Activated B cell treated with CpG ODN at 0.5 μM for 24 hours (primary cell): ENCODE measurements at regions of chr2 and their contacts with region 1.

Region 1: DNA sequence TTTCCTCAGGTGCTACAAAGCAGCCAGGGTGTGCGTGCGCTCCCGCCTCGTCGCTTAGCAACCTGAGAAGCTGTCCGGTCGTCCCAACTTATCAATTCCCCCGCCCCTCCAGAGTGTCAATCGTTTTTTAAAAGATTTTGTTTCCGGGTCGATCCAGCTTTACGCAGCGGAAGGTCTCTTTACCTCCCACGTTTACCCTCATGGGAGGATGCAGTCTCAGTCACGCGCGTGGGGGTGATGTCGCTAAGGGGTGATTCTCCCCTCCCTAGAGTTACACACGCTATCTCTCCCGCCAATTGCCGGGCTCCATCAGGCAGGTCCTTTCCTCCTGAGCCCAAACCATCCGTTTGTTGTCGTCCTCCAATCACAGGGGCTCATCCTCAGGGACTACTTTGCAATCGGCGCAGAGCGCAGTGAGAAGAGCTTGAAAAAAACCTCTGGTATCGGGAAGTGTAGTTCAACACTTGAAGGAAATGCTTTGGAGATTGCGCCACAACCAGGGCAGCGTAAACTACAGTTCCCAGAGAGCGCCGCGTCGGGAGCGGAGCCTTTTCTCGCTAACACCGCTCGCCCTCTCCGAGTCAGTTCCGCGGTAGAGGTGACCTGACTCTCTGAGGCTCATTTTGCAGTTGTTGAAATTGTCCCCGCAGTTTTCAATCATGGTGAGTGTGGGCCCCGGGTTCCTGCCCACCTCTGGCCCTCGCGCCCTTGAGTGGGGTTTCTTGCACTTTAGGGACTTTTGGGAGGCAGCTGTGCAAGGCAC is at the starts of genes MDH1 and WDPCP:
- DNase-seq: peak; percentile 80
- ATAC-seq: peak; percentile 86
- H3K4me3 Mint-ChIP-seq: peak within 1 kb of the TSS; percentile 97
- H3K27ac Mint-ChIP-seq: peak within 1 kb of the TSS; percentile 97
- H3K4me1 Mint-ChIP-seq: peaks cover 47% of the 10 kb centered on the region
- H3K27me3 Mint-ChIP-seq: no peaks in the 10 kb centered on the region
- CTCF ChIP-seq: no peak
- total RNA-seq, gene MDH1: 117 and 120 TPM in 2 replicates
- total RNA-seq, gene WDPCP: 10.0 and 12.9 TPM in 2 replicates

Region 2: GRCh38 chr2:61764035-61764800 is 1824.3 kb before region 1 on chr2:
- CTCF ChIA-PET with region 1: no interaction called
- POLR2A ChIA-PET with region 1: no interaction called
- intact Hi-C with region 1: loop called (anchors 1 kb)
- DNase-seq: peak; percentile 88
- ATAC-seq: peak; percentile 98
- H3K4me3 Mint-ChIP-seq: peak overlapping the region; percentile 95
- H3K27ac Mint-ChIP-seq: peak overlapping the region; percentile 94
- H3K4me1 Mint-ChIP-seq: peaks cover 16% of the 10 kb centered on the region
- H3K27me3 Mint-ChIP-seq: no peaks in the 10 kb centered on the region
- CTCF ChIP-seq: no peak

Region 3: GRCh38 chr2:61888267-61889055 is 1700.1 kb before region 1 on chr2 and contains the start of gene CCT4:
- CTCF ChIA-PET with region 1: no interaction called
- POLR2A ChIA-PET with region 1: no interaction called
- intact Hi-C with region 1: loop called (anchors 1 kb)
- DNase-seq: peak; percentile 99
- ATAC-seq: peak; percentile 85
- H3K4me3 Mint-ChIP-seq: peak within 1 kb of the TSS; percentile 100
- H3K27ac Mint-ChIP-seq: peak within 1 kb of the TSS; percentile 99
- H3K4me1 Mint-ChIP-seq: peaks cover 23% of the 10 kb centered on the region
- H3K27me3 Mint-ChIP-seq: no peaks in the 10 kb centered on the region
- CTCF ChIP-seq: no peak
- total RNA-seq, gene CCT4: 172 and 188 TPM in 2 replicates

Region 4: DNA sequence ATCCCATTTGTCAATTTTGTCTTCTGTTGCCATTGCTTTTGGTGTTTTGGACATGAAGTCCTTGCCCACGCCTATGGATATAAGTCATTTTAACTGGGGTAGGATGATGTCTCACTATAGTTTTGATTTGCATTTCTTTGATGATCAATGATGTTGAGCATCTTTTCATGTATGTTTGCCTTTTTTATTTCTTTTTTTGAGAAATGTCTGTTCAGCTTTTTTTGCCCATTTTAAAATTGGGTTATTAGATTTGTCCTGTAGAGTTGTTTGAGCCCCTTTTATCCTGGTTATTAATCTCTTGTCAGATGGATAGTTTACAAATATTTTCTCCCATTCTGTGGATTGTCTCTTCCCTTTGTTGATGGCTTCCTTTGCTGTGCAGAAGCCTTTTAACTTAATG is 1607.8 kb before region 1 on chr2:
- CTCF ChIA-PET with region 1: no interaction called
- POLR2A ChIA-PET with region 1: no interaction called
- intact Hi-C with region 1: no loop called
- DNase-seq: no peak
- ATAC-seq: no peak
- H3K4me3 Mint-ChIP-seq: no peak overlapping the region
- H3K27ac Mint-ChIP-seq: no peak overlapping the region
- H3K4me1 Mint-ChIP-seq: peaks cover 14% of the 10 kb centered on the region
- H3K27me3 Mint-ChIP-seq: no peaks in the 10 kb centered on the region
- CTCF ChIP-seq: no peak

Region 5: DNA sequence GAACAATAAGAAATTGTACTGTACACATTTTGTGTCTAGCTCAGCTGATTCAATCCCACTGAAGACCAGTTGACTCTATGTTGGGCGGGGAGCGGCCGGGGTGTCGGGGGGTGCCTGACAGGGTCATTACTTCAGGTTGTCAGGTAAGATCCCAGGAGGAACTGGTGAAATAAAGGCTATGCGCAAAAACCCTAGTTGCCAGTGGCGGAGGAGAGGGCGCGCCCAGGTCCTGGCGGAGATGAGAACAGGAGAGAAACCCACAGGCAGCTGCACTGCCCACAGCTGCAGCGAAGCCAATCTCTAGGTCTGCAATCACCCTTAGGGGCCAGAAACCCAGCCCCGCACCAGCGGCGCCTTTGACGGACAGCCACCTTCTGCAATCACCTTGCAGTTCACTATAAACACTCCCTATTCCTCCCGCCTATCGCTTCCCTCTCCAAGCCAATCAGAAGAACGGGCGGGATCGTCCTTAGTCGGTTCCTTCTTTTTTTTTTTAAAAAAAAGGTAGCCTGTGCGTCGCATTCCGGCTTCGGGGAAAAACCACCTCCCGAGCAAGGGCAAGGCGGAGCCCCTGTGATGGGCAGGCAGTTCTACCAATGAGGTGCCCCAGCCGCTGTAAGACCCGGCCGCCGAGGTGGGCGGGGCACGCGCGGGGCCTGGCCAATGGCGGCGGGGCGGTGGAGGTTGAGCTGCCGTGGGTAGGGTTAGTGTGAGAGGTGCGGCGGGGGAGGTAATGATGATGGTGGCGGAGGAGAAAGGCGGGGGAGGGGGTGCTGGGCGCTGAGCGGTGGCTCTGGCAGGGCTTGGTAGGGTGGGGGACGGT is 883.3 kb before region 1 on chr2 and contains the start of gene EHBP1:
- CTCF ChIA-PET with region 1: no interaction called
- POLR2A ChIA-PET with region 1: interaction called, 6 read pairs
- intact Hi-C with region 1: loop called (anchors 1 kb)
- DNase-seq: peak; percentile 98
- ATAC-seq: peak; percentile 93
- H3K4me3 Mint-ChIP-seq: peak within 1 kb of the TSS; percentile 95
- H3K27ac Mint-ChIP-seq: peak within 1 kb of the TSS; percentile 78
- H3K4me1 Mint-ChIP-seq: peaks cover 34% of the 10 kb centered on the region
- H3K27me3 Mint-ChIP-seq: no peaks in the 10 kb centered on the region
- CTCF ChIP-seq: no peak
- total RNA-seq, gene EHBP1: 24.0 and 25.0 TPM in 2 replicates

Region 6: DNA sequence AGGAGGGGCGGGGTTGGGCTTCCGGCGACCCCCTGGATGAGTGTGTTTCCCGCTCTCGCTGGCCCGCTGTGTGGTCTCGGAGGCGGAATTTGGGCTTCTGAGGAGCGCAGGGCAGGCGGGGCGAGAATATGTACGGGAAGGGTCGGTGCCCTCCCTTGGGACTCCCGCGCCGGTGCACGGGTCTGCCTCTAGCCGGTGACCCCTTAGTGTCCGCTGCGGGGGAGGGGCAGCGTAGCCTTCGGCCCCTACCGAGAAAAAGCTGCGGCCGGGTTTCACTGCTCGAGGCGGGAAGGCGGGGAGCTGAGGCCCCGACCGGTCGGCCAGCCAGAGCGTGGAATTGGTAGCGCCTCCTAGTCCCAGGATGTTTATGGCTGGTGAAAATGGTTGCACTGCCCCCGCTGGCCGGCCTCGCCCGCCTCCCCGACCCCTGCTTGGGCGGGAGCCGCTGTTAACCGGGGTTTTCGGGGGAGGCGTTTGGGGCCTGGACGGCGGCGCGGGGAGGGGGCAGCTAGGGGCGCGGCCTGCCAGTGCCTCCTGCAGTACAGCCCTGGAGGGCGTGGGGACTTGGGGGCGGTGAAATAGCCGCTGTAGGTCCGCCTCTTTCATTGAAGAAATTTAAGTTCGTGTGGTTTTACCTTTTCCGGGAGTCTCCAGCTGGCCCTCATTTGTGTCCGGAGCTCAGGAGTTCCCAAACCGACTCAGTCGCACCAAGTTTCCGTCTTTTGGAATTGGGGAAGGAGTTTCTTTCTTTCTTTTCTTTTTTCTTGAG is 252.9 kb after region 1 on chr2 and contains the start of gene UGP2:
- CTCF ChIA-PET with region 1: no interaction called
- POLR2A ChIA-PET with region 1: interaction called, 39 read pairs
- intact Hi-C with region 1: loop called (anchors 1 kb)
- DNase-seq: peak; percentile 75
- ATAC-seq: peak; percentile 68
- H3K4me3 Mint-ChIP-seq: peak within 1 kb of the TSS; percentile 97
- H3K27ac Mint-ChIP-seq: peak within 1 kb of the TSS; percentile 97
- H3K4me1 Mint-ChIP-seq: peaks cover 53% of the 10 kb centered on the region
- H3K27me3 Mint-ChIP-seq: peaks cover 1% of the 10 kb centered on the region
- CTCF ChIP-seq: no peak
- total RNA-seq, gene UGP2: 69.8 and 73.5 TPM in 2 replicates

Region 7: GRCh38 chr2:63888490-63889402 is 300.2 kb after region 1 on chr2:
- CTCF ChIA-PET with region 1: no interaction called
- POLR2A ChIA-PET with region 1: no interaction called
- intact Hi-C with region 1: no loop called
- DNase-seq: no peak
- ATAC-seq: peak; percentile 69
- H3K4me3 Mint-ChIP-seq: no peak overlapping the region
- H3K27ac Mint-ChIP-seq: no peak overlapping the region
- H3K4me1 Mint-ChIP-seq: no peaks in the 10 kb centered on the region
- H3K27me3 Mint-ChIP-seq: no peaks in the 10 kb centered on the region
- CTCF ChIP-seq: no peak

Region 8: GRCh38 chr2:65056215-65057053 is 1467.9 kb after region 1 on chr2 and contains the start of gene CEP68:
- CTCF ChIA-PET with region 1: no interaction called
- POLR2A ChIA-PET with region 1: no interaction called
- intact Hi-C with region 1: loop called (anchors 10 kb)
- DNase-seq: peak; percentile 95
- ATAC-seq: peak; percentile 91
- H3K4me3 Mint-ChIP-seq: peak within 1 kb of the TSS; percentile 97
- H3K27ac Mint-ChIP-seq: peak within 1 kb of the TSS; percentile 95
- H3K4me1 Mint-ChIP-seq: peaks cover 75% of the 10 kb centered on the region
- H3K27me3 Mint-ChIP-seq: no peaks in the 10 kb centered on the region
- CTCF ChIP-seq: no peak
- total RNA-seq, gene CEP68: 16.6 and 17.9 TPM in 2 replicates

Region 9: GRCh38 chr2:65227425-65228262 is 1639.1 kb after region 1 on chr2 and contains the start of gene ACTR2:
- CTCF ChIA-PET with region 1: no interaction called
- POLR2A ChIA-PET with region 1: interaction called, 9 read pairs
- intact Hi-C with region 1: loop called (anchors 5 kb)
- DNase-seq: peak; percentile 88
- ATAC-seq: peak; percentile 90
- H3K4me3 Mint-ChIP-seq: peak within 1 kb of the TSS; percentile 99
- H3K27ac Mint-ChIP-seq: peak within 1 kb of the TSS; percentile 100
- H3K4me1 Mint-ChIP-seq: peaks cover 45% of the 10 kb centered on the region
- H3K27me3 Mint-ChIP-seq: no peaks in the 10 kb centered on the region
- CTCF ChIP-seq: no peak
- total RNA-seq, gene ACTR2: 484 and 493 TPM in 2 replicates